Activated B cell treated with CpG ODN at 0.5 μM for 24 hours (primary cell): ENCODE measurements at regions of chr10 and their contacts with region 1.

Region 1: DNA sequence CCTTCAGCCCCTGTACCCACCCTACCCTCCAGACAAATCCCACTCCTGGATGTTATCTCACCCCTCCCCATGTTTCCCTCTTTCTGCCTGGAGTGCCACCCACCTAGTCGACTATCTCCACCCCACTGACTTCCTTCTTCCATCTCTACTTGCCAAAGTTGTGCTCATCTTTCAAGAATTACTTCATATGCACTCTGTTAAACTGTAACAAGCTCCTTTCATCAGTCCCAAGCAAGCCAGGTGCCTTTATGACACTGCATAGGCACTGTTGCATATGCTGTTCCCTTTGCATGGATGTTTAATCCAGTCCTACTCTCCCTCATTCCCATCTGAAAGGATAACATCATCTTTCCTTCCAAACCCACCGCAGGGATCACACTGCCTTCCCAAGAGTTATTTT is 8.9 kb upstream of the CDK1 start:
- DNase-seq: no peak
- ATAC-seq: no peak
- H3K4me3 Mint-ChIP-seq: no peak overlapping the region
- H3K27ac Mint-ChIP-seq: no peak overlapping the region
- H3K4me1 Mint-ChIP-seq: no peaks in the 10 kb centered on the region
- H3K27me3 Mint-ChIP-seq: no peaks in the 10 kb centered on the region
- CTCF ChIP-seq: no peak

Region 2: DNA sequence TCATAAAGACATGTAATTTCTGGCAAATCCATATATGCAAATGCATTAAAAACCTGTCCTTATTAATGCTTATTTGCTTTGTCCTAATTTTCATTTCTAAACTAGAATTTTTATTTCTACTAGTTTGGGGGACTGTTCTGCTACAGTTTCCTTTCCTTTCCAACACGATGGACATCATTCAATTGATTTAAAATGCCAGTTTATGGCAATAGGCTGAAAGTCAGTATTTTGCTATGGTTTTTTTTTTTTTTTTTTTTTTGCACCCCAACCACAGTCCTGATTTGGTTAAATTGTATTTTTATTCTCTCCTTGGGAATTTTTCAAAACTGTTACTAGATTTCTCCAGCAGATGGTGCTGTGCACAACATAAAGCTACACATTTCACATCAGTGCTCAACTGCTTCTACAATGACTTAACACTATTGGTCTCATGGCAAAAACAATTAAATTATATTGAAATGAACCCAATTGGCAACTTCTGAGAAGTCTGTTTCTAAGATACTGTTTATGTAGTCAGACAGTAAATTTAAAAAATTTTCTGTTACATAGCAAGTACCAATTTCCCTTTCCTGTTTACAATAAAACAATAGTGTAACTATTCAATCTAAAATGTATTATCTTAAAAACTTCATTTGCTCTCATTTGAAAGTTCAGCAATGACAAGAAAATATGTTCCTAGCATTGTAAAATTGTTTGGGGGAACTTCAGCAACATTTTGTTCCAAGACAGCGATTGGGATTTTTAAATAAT is 669.2 kb before region 1 on chr10:
- CTCF ChIA-PET with region 1: interaction called, 3 read pairs
- POLR2A ChIA-PET with region 1: no interaction called
- intact Hi-C with region 1: loop called (anchors 2 kb)
- DNase-seq: no peak
- ATAC-seq: no peak
- H3K4me3 Mint-ChIP-seq: no peak overlapping the region
- H3K27ac Mint-ChIP-seq: no peak overlapping the region
- H3K4me1 Mint-ChIP-seq: no peaks in the 10 kb centered on the region
- H3K27me3 Mint-ChIP-seq: no peaks in the 10 kb centered on the region
- CTCF ChIP-seq: peak; percentile 70

Region 3: DNA sequence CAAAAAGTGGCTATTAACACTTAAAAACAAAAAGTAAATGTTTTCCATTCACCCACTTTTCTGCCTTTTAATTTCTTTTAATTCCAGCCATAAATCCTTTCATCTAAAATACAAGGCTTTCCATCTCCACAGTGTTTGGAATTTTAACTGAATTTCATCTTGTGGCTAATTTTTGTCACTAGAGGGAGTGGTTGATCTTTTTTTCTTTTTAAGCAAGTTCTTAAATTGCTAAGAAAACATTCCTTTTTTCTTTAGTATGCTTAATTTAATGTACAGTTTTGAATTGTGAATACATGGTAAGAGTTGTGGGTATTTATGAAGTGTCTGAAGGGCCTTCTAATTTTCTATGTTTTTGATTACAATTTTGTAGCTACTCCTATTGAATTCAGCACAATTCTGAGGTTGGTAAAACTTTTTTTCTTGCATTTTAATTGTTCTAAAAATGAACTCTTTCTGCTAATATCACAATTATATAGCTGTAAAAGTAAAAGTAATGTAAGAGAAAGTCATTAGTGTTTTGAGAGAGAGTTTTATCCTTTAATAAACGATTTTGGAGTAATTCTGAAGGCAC is 324.8 kb before region 1 on chr10:
- CTCF ChIA-PET with region 1: interaction called, 5 read pairs
- POLR2A ChIA-PET with region 1: no interaction called
- intact Hi-C with region 1: loop called (anchors 1 kb)
- DNase-seq: no peak
- ATAC-seq: no peak
- H3K4me3 Mint-ChIP-seq: no peak overlapping the region
- H3K27ac Mint-ChIP-seq: no peak overlapping the region
- H3K4me1 Mint-ChIP-seq: peaks cover 8% of the 10 kb centered on the region
- H3K27me3 Mint-ChIP-seq: no peaks in the 10 kb centered on the region
- CTCF ChIP-seq: no peak

Region 4: GRCh38 chr10:60549686-60550085 is 219.7 kb before region 1 on chr10:
- CTCF ChIA-PET with region 1: no interaction called
- POLR2A ChIA-PET with region 1: no interaction called
- intact Hi-C with region 1: loop called (anchors 2 kb)
- DNase-seq: no peak
- ATAC-seq: no peak
- H3K4me3 Mint-ChIP-seq: no peak overlapping the region
- H3K27ac Mint-ChIP-seq: no peak overlapping the region
- H3K4me1 Mint-ChIP-seq: no peaks in the 10 kb centered on the region
- H3K27me3 Mint-ChIP-seq: no peaks in the 10 kb centered on the region
- CTCF ChIP-seq: no peak